ENCODE measurements at regions of chr6 and their contacts with region 1.

Region 1: GRCh38 chr6:149316798-149317655 is 485 bp upstream of the TAB2 start:
- DNase-seq: peak; percentile 90 to 95 (median 93)
- ATAC-seq: peak; percentile 90 to 97 (median 96)
- H3K4me3 ChIP-seq: peak overlapping the region; percentile 85 to 99 (median 93)
- H3K27ac ChIP-seq: peak overlapping the region; percentile 87 to 99 (median 96)
- H3K4me1 ChIP-seq: peaks cover 0 to 40% (median 20%) of the 10 kb centered on the region in 12 donors
- H3K27me3 ChIP-seq: peaks cover 0 to 4% (median 0%) of the 10 kb centered on the region in 9 donors
- CTCF ChIP-seq: peak in 2 of 12 donors; percentile 7 to 13
- POLR2A ChIP-seq: peak; percentile 23 to 72

Region 2: GRCh38 chr6:148866657-148867268 is 450.3 kb before region 1 on chr6:
- intact Hi-C with region 1: no loop called
- DNase-seq: no peak
- ATAC-seq: no peak
- H3K4me3 ChIP-seq: no peak overlapping the region
- H3K27ac ChIP-seq: no peak overlapping the region
- H3K4me1 ChIP-seq: peaks cover 0 to 14% (median 0%) of the 10 kb centered on the region in 12 donors
- H3K27me3 ChIP-seq: no peaks in the 10 kb centered on the region
- CTCF ChIP-seq: no peak
- POLR2A ChIP-seq: no peak

Region 3: DNA sequence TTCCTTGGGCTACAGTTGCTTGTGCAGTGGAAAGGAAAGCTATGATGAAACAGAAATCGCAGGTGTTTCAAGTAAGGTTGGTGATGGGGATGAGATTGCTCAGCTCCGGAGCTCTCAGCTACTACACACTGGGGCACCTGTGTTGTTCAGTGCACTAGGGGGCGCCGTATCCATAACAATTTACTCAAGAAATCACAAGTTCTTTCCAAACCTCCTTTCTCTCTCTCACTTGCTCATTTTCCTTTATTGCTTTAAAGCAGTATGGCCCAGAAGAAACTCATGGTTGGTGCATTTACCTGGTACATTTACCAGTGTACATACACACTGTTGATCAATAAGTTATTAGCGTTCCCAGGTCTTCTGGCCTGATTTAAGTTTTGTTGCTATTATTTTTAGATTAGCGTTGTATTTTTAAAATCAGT is 234.7 kb before region 1 on chr6:
- intact Hi-C with region 1: loop called in 2 of 10 experiments (anchors 5 to 10 kb)
- DNase-seq: peak; percentile 70 to 88 (median 76)
- ATAC-seq: peak in 3 of 4 donors; percentile 57 to 73 (median 69)
- H3K4me3 ChIP-seq: no peak overlapping the region
- H3K27ac ChIP-seq: no peak overlapping the region
- H3K4me1 ChIP-seq: peaks cover 0 to 21% (median 14%) of the 10 kb centered on the region in 12 donors
- H3K27me3 ChIP-seq: no peaks in the 10 kb centered on the region
- CTCF ChIP-seq: peak; percentile 70 to 89 (median 80)
- POLR2A ChIP-seq: no peak

Region 4: DNA sequence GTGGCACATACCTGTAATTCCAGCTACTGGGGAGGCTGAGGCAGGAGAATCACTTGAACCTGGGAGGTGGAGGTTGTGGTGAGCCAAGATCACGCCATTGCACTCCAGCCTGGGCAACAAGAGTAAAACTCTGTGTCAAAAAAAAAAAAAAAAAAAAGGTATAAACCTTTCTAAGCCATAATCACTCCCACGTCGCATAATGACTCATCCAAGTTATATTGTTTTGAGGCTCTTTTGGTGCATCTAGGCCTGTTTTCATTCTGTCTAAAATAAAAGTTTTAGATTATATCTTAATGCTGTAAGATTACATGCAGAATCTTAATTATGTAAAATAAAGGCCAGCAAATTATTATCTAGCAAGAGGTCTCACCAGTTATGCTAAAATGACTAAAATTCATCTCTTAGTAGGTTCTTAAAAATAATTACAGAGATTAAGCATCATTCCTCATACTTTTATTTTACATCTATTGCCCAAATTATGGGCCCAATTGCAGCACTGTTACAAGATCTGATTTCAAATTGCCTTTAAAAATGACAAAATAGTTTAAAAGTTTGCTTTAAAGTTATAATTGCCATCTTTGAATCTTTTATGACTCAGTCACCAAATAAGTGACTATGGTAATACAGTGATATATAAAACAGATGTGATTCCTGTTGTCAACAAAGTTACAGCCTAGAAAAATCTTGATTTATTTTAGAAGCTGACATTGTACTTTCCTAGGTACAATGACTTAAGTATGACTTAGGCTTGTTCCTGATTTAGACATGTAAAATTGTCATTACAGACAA is 72.7 kb after region 1 on chr6:
- intact Hi-C with region 1: loop called in 1 of 10 experiments (anchors 5 kb)
- DNase-seq: no peak
- ATAC-seq: no peak
- H3K4me3 ChIP-seq: no peak overlapping the region
- H3K27ac ChIP-seq: no peak overlapping the region
- H3K4me1 ChIP-seq: peaks cover 0 to 16% (median 4%) of the 10 kb centered on the region in 12 donors
- H3K27me3 ChIP-seq: no peaks in the 10 kb centered on the region
- CTCF ChIP-seq: no peak
- POLR2A ChIP-seq: no peak

Region 5: GRCh38 chr6:149410557-149410956 is 93.5 kb after region 1 on chr6:
- intact Hi-C with region 1: loop called in 1 of 10 experiments (anchors 10 kb)
- DNase-seq: no peak
- ATAC-seq: peak; percentile 70 to 76 (median 74)
- H3K4me3 ChIP-seq: no peak overlapping the region
- H3K27ac ChIP-seq: peak overlapping the region in 5 of 12 donors; percentile 2 to 58 (median 19)
- H3K4me1 ChIP-seq: peaks cover 0 to 24% (median 1%) of the 10 kb centered on the region in 12 donors
- H3K27me3 ChIP-seq: no peaks in the 10 kb centered on the region
- CTCF ChIP-seq: no peak
- POLR2A ChIP-seq: no peak